ENCODE measurements at regions of chr6 and their contacts with region 1.

Region 1: DNA sequence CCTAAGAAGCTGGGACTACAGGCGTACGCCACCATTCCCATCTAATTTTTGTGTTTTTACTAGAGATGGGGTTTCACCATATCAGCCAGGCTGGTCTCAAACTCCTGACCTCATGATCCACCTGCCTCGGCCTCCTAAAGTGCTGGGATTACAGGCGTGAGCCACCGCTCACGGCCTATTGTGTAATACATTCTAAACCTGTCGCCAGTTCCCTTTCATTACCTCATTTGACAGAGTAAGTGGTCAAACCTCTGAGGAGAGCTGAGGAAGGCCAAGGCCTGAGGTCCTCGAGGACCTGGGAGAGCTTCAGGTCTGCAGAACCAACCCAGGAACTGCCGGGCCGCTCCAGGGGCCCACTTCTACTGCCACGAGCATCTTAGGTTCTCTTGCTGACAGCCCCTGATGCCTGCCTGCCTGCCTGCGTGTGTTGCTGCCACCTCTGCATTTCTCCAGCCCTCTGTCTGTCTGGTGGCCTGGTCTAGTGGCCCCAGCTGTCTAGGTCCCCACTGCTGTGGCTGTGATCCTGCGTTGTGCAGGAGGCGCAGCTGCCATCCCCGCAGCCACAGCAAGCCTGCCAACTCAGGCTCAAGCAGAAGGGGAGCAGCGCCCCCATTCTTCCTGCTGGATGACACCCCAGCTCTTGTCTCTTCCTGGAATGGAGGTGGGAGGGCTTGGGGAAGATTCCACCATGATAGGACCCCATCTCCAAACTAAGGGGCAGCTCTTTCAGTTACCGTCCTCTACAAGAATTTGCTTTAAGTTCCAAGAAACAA is 45.3 kb downstream of the PRR18 start:
- DNase-seq: no peak
- ATAC-seq: no peak; the same call in 2 of the 3 replicates
- H3K4me3 ChIP-seq: no peak overlapping the region
- H3K27ac ChIP-seq: no peak overlapping the region
- H3K4me1 ChIP-seq: no peaks in the 10 kb centered on the region
- H3K27me3 ChIP-seq: peaks cover 23 to 56% of the 10 kb centered on the region in 2 experiments
- CTCF ChIP-seq: peak in 1 of 3 experiments; percentile 19; a peak in 1 of 6 replicates
- EP300 ChIP-seq: no peak
- POLR2A ChIP-seq: no peak
- RAD21 ChIP-seq: peak in 1 of 2 experiments; percentile 26; a peak in 1 of 4 replicates

Region 2: GRCh38 chr6:166156942-166157341 is 106.0 kb before region 1 on chr6:
- CTCF ChIA-PET with region 1: no interaction called
- POLR2A ChIA-PET with region 1: no interaction called
- in situ Hi-C with region 1: no loop called
- intact Hi-C with region 1: loop called (anchors 1 kb)
- DNase-seq: no peak
- ATAC-seq: no peak
- H3K4me3 ChIP-seq: no peak overlapping the region
- H3K27ac ChIP-seq: no peak overlapping the region
- H3K4me1 ChIP-seq: peaks cover 0 to 3% of the 10 kb centered on the region in 2 experiments; a peak in 1 of 5 replicates
- H3K27me3 ChIP-seq: peaks cover 17 to 50% of the 10 kb centered on the region in 2 experiments
- CTCF ChIP-seq: peak in 2 of 3 experiments; percentile 38 to 52; a peak in 4 of 6 replicates
- EP300 ChIP-seq: no peak
- POLR2A ChIP-seq: no peak
- RAD21 ChIP-seq: peak; percentile 54 to 73